WTC11 (cell line): ENCODE measurements at regions of chr12 and their contacts with region 1.

Region 1: DNA sequence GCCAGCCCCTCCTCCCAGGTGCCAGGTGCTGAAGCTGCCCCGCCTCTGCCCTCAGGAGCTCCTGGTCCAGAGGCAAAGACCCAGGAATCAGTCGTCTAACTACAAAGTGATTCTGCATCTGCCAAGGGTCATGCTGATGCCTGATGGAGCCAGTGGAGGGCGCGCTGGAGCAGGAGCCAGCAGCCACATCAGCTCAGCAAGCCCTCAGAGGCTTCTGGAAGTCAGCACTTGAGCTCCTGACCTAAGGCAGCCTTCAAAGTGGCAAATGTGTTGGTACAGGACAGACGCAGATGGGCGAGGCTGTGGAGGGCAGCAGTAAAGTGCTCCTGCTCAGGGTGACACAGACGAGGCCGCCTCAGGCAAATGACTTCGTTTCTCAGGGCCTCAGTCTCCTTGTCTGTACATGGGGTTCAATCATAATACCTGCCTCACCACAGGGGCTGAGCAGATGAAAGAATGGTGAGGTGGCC is 10.9 kb downstream of the C12orf43 start:
- DNase-seq: peak; percentile 84
- ATAC-seq: peak; percentile 78
- H3K4me3 Mint-ChIP-seq: no peak overlapping the region
- H3K27ac Mint-ChIP-seq: peak overlapping the region; percentile 87
- H3K4me1 Mint-ChIP-seq: peaks cover 2% of the 10 kb centered on the region; the same call in 1 of the 2 replicates
- H3K27me3 Mint-ChIP-seq: no peaks in the 10 kb centered on the region
- CTCF ChIP-seq: peak; percentile 80

Region 2: GRCh38 chr12:120649442-120650232 is 355.7 kb before region 1 on chr12:
- CTCF ChIA-PET with region 1: interaction called, 14 read pairs
- POLR2A ChIA-PET with region 1: interaction called, 3 read pairs
- DNase-seq: peak; percentile 28
- ATAC-seq: peak; percentile 11
- H3K4me3 Mint-ChIP-seq: peak overlapping the region; percentile 69
- H3K27ac Mint-ChIP-seq: peak overlapping the region; percentile 64; the same call in 1 of the 2 replicates
- H3K4me1 Mint-ChIP-seq: peaks cover 43% of the 10 kb centered on the region
- H3K27me3 Mint-ChIP-seq: no peaks in the 10 kb centered on the region; the same call in 1 of the 2 replicates
- CTCF ChIP-seq: no peak; the same call in 1 of the 2 replicates

Region 3: DNA sequence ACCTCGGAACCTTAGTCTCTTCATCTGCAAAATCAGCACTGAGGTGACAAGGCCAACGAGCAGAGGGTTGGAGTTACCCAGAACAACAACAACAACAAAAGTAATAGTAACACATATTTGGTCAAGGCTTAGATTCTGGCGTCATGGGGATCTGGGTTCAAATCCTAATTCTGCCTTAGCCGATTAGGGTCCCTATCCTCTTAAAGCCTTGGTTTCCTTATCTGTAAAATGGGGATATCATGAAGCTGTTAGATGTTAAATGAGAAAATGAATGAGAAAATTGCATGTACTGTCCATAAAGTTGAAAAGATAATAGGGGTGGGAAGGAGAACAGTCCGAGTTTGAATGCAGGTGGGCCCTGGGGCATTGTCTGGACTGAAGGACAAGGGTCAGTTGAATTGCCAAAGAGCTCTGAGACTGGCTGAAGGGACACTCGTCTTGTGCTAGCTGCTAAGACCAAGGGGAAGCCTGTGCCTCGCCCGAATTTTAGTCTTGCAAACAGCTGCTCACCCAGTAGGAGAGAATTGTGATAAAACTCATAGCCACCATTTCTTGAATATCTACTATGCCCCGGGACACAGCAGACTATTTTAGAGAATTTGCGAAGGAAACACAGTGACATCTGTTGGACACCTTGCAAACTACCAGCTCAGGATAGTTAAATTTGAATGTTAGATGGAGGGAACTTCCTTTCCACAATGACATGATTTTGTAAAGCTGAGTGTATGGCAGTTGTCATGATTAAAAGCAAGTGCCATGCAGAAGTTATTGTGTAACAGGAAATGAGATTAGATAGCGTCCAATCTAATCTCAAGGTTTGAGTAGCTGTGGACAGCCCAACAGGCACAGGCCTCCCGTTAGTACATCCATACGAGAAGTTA is 33.8 kb before region 1 on chr12:
- CTCF ChIA-PET with region 1: interaction called, 30 read pairs
- POLR2A ChIA-PET with region 1: interaction called, 4 read pairs
- DNase-seq: no peak
- ATAC-seq: peak; percentile 43; the same call in 1 of the 2 replicates
- H3K4me3 Mint-ChIP-seq: no peak overlapping the region
- H3K27ac Mint-ChIP-seq: peak overlapping the region; percentile 88
- H3K4me1 Mint-ChIP-seq: peaks cover 17% of the 10 kb centered on the region
- H3K27me3 Mint-ChIP-seq: no peaks in the 10 kb centered on the region
- CTCF ChIP-seq: peak; percentile 24; the same call in 1 of the 2 replicates

Region 4: DNA sequence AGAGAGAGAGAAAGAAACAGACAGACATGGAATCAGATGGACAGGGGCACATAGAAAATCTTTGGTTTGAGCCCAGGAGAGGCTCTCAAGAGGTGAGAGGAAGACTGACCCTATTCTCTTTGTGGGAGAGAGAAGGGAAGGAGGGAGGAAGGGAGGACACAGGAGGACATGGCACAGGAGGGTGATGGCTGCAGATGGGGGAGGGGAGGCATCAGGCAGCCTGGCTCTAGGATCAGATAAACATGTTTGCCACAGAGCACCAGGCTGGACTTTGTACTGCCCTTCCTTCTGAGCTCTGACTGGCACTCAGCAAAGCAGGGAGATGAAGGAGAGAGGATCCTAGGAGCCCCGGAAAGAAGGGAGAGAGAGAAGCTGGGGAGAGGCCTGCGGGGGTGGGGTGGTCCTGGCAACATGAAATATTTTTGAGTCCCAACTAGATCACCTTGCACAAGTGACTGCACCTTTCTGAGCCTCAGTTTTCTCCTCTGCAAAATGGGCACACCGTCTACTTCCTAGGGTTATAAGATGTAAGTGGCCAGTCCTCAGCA is 21.0 kb before region 1 on chr12:
- CTCF ChIA-PET with region 1: interaction called, 35 read pairs
- POLR2A ChIA-PET with region 1: no interaction called
- DNase-seq: no peak
- ATAC-seq: peak; percentile 30
- H3K4me3 Mint-ChIP-seq: no peak overlapping the region
- H3K27ac Mint-ChIP-seq: peak overlapping the region; percentile 11; the same call in 1 of the 2 replicates
- H3K4me1 Mint-ChIP-seq: peaks cover 17% of the 10 kb centered on the region
- H3K27me3 Mint-ChIP-seq: no peaks in the 10 kb centered on the region
- CTCF ChIP-seq: no peak

Region 5: DNA sequence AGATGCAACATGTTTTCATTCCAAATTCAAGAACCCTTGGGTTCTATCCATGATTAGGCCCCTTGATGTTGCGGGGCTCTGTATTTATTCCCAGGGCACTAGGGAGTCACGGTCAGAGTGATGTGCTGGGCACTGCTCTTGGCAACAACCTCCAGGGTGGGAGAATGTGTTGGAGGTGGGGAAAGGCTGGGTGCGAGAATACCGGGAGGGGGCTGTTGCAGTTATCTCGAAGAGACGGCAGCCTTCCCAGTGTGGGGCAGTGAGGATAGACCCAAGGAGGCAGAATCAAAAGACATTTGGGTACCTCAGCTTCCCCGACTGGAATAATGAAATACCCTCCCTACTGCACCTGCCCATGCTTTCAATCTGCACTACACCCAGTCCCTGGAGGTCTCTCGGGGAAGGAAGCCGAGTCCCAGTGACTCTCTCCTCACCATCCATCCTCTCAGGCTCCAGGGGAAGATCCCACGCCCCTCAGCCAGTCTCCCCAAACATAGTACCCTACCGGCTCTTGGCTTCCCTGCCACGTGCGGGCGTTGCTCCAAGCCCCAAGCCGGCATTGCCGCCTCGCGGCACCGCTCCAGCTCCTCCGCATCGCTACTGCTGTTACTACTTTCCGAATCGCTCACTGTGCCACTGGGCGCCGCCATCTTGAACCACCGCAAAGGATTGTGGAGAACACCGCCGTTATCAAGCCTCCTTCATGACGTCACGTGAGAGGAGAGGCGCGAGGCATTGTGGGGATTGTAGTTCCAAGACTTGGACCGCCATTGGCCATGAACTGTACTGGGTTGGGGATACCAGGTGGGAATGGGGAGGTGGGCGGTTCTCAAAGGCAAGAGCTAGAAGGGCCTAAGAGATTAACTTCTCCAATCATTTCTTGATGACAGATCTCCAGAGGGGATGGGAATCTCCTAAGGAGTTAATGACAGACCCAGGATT is 10.7 kb after region 1 on chr12 and contains the start of gene C12orf43:
- CTCF ChIA-PET with region 1: interaction called, 17 read pairs
- POLR2A ChIA-PET with region 1: interaction called, 4 read pairs
- DNase-seq: peak; percentile 95
- ATAC-seq: peak; percentile 97
- H3K4me3 Mint-ChIP-seq: peak within 1 kb of the TSS; percentile 100
- H3K27ac Mint-ChIP-seq: peak within 1 kb of the TSS; percentile 98
- H3K4me1 Mint-ChIP-seq: peaks cover 10% of the 10 kb centered on the region
- H3K27me3 Mint-ChIP-seq: no peaks in the 10 kb centered on the region; the same call in 1 of the 2 replicates
- CTCF ChIP-seq: no peak
- total RNA-seq, gene C12orf43: 19.1 to 20.7 TPM (median 19.2 TPM) in 3 replicates

Region 6: DNA sequence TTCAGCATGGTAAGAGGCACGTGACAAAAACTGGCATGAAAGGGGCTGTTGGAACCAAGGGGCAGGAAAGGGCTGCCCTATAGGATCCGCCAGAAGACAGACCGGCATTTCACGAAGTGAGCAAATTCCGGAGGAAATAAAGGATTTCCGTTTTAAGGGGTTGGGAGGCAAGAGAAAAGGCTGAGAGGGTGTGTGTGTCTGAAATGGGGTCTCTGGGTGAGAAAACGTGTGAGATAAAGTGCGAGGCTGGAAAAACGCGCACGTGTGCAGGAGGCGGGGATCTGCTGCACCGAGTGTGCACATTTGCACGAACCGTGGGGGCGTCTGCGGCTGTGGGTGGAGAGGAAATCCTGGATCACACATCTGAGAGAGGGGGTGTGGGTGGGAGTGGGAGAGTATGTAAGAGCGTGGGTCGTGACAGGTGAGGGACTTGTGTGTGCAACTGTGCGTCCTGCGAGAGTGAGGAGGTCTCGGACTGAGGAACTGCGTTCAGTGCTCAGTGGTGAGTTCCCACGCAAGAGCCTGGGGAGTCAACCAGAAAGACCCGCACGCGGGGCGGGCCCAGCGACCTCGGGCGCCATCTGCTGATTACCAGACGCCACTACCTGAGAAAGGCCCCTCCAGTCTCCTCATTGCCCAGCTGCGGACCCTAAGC is 90.3 kb after region 1 on chr12:
- CTCF ChIA-PET with region 1: interaction called, 18 read pairs
- POLR2A ChIA-PET with region 1: no interaction called
- DNase-seq: peak; percentile 83
- ATAC-seq: peak; percentile 96
- H3K4me3 Mint-ChIP-seq: peak overlapping the region; percentile 62
- H3K27ac Mint-ChIP-seq: no peak overlapping the region
- H3K4me1 Mint-ChIP-seq: peaks cover 17% of the 10 kb centered on the region
- H3K27me3 Mint-ChIP-seq: peaks cover 29% of the 10 kb centered on the region
- CTCF ChIP-seq: peak; percentile 58